Head of caudate nucleus (tissue), 42 donors: ENCODE measurements at regions of chr19 and their contacts with region 1.

Region 1: DNA sequence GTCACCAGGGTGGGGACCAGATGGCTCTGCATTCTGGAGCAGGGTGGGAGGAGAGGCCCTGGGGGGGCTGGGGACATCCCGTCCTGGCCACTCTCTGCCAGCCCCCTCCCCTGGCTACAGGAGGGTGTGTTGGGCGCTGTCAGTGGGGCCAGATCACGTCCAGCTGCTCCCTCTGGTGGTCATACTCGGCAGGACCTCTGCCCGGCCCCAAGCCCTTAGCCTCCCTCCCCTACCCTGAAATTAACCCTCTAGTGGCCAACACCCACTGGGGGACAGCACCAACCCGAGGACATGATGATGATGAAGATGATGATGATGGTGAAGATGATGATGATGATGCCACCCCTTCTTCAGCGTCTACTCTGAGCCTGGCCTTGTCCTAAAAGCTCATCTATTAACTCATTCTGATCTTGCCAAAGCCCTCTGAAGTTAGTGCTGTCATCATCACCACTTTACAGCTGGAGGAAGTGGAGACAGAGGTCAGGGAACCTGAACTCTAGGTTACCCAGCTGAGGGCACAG is 590 bp upstream of the LGI4 start:
- DNase-seq: peak in 41 of 42 donors; percentile 70 to 94 (median 85)

Region 2: DNA sequence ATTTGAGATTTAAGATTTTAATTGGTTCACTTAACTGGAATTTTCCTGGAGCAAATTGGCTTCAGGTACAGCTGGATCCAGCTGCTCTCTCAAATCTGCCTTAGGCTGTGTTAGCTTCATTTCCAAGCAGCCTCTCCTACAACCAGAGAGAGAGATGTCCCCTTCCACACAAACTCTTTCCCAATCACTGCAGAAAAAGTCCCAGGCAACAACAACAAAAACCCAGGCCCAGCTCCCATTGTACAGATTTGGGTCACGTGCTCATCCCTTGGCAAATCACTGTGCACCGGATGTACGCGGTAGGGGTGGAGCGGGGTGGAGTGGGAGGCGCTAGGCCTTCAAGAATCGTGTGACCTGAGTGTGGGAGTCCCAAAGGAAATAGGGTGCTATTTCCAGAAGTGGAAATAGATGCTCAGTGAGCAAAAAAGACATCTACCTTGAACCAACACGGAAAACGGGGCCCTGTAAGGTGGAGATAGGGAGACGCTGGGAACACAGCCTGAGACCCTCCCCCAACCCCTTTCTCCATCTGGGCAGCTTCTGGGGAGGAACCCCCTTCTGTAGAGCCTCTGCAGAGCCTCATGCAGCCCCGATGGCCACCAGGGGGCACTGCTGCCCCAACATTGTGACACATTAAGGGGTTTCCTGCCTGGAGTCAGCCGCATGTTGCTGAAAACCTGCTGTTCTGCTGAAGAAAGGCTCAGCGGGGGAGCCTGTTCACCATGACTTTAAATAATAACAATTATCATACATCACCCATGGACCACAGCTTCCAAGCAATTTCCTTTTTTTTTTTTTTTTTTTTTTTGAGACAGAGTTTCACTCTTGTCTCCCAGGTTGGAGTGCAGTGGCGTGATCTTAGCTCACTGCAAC is 68.5 kb before region 1 on chr19:
- intact Hi-C with region 1: loop called (anchors 5 kb)
- DNase-seq: peak; percentile 69 to 97 (median 92)

Region 3: GRCh38 chr19:35380450-35381124 is 245.1 kb after region 1 on chr19:
- intact Hi-C with region 1: no loop called
- DNase-seq: peak in 1 of 42 donors; percentile 13